ENCODE measurements at regions of chr19 and their contacts with region 1.

Region 1: DNA sequence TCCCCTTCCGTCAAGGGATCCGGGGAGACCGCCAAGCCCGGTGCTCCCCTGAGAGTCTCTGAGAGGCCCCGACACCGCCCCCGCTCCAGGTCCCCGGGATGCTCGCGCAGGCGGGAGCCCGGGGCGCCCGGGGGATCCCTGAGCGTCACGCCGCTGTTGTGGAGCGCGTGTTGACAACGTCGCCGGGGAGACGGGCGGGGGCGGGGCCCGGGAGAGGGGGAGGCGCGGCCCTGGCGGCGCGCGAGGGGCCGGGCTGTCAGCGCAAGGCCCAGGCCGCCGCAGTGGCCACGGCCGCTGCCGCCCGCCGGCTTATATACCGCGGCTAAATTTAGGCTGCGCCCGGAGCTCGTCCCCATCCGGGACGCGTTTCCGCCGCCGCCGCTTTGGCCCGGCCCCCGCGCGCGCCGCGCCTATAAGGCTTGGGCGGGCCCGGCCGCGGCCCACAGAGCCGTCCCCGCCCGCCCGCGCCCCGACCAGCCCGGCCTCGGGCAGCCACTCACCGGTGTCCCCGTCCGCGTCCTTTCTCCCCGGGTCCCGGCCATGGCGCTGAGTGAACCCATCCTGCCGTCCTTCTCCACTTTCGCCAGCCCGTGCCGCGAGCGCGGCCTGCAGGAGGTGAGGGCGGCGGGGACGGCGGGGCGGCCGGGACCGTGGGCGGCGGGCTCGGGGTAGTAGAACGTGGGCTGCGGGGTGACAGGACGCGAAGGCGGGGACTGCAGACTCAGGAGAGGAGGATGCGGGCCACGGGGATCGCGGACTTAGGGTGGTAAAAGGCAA is at the start of gene KLF2:
- DNase-seq: peak; percentile 96
- H3K4me3 Mint-ChIP-seq: peak within 1 kb of the TSS; percentile 69
- H3K27ac Mint-ChIP-seq: peak within 1 kb of the TSS; percentile 74
- H3K4me1 Mint-ChIP-seq: peaks cover 42% of the 10 kb centered on the region
- H3K27me3 Mint-ChIP-seq: peaks cover 30% of the 10 kb centered on the region
- total RNA-seq, gene KLF2: 410 to 423 TPM

Region 2: DNA sequence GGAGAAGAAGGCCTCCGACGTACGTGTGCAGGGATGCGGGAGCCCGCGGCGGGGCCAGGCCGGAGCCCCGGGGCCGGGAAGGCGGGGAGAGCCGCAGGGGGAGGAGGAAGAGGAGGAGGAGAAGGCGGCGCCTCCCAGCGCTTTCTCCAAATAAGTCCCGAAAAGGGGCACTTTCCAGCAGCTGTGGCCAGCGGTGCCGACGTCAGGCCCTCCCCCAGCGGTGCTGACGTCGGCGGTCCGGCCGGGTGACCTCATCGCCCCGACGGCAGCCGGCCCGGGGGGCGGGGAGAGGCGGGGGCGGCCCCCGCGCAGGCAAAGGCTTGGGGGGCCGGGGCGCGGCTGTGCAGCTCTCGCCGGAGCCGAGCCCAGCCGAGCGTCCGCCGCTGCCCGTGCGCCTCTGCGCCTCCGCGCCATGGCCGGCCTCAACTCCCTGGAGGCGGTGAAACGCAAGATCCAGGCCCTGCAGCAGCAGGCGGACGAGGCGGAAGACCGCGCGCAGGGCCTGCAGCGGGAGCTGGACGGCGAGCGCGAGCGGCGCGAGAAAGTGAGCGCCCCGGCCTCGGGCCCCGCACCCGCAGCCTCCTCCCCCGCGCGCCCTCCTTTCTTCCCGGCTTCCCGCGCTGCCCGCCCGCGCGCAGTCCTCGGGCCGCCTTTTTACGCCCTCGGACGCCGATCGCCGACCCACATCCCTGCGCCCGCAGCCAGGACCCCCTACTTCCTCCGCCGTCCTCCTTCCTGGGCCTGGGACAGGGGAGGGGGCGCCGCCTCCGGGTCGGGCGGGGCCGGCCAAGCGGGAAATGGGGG is 248.2 kb before region 1 on chr19 and contains the start of gene TPM4:
- CTCF ChIA-PET with region 1: no interaction called
- POLR2A ChIA-PET with region 1: interaction called, 85 read pairs
- DNase-seq: peak; percentile 94
- H3K4me3 Mint-ChIP-seq: peak within 1 kb of the TSS; percentile 82
- H3K27ac Mint-ChIP-seq: peak within 1 kb of the TSS; percentile 98
- H3K4me1 Mint-ChIP-seq: peaks cover 65% of the 10 kb centered on the region
- H3K27me3 Mint-ChIP-seq: no peaks in the 10 kb centered on the region
- total RNA-seq, gene TPM4: 592 to 611 TPM

Region 3: DNA sequence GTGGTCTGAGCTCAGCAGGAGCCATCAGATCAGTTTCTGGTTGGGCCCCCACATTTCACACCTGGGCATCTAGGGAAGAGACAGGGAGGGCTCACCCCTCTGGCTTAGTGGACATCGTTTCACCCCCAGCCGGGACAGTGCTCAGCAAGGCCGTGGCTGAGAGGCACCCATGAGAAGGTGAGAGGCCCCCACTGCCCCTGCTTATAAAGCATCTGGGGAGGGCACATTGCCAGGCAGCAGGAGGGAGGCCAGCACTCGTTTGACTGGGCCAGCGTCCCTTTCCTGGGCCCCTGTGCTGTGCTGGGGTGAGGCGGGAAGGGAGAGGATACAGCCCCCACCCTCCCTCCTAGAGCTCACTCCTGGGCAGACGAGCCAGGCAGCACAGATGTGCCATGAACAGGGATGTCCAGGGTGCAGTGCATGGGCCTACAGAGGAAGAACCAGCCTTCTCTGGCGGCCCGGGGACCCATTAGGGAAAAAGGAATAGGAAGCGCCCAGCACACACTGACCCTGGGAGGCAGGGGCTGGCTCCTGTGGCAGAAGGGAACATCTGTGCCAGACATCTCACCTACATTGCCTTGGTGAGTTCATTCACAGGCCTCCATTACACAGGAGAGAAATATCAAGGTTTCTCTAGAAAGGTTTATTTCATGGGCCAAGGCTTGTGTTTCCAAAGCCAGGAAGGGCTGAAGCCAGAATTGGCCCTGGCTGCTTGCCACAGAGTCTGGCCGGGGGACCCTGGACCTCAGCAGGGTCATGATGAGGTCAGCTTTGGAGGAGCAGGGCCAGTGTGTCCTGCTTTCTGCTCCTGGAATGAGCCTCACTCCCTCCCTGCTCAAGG is 119.1 kb before region 1 on chr19:
- CTCF ChIA-PET with region 1: no interaction called
- POLR2A ChIA-PET with region 1: no interaction called
- DNase-seq: no peak
- H3K4me3 Mint-ChIP-seq: no peak overlapping the region
- H3K27ac Mint-ChIP-seq: no peak overlapping the region
- H3K4me1 Mint-ChIP-seq: peaks cover 41% of the 10 kb centered on the region
- H3K27me3 Mint-ChIP-seq: no peaks in the 10 kb centered on the region

Region 4: GRCh38 chr19:16247353-16248182 is 77.0 kb before region 1 on chr19:
- CTCF ChIA-PET with region 1: interaction called, 46 read pairs
- POLR2A ChIA-PET with region 1: interaction called, 61 read pairs
- DNase-seq: peak; percentile 87
- H3K4me3 Mint-ChIP-seq: no peak overlapping the region
- H3K27ac Mint-ChIP-seq: peak overlapping the region; percentile 55
- H3K4me1 Mint-ChIP-seq: peaks cover 28% of the 10 kb centered on the region
- H3K27me3 Mint-ChIP-seq: peaks cover 19% of the 10 kb centered on the region

Region 5: DNA sequence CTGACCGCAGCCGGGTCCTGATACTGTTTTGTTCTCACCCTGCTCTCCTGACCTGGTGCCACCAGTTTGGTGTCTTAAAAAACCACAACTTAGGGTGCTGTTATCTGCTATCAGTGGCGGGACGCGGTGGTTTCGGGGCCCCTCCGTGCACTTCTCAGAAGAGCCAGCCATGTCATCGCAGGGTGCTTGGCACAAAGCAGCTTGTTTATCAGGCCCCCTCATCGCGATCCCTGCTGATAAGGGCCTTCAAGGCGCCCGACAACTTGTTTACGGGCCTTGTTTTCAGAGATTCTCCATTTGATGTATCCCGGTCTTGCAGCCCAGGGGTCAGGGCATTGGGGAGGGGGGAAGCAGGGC is 58.0 kb before region 1 on chr19:
- CTCF ChIA-PET with region 1: interaction called, 3 read pairs
- POLR2A ChIA-PET with region 1: interaction called, 68 read pairs
- DNase-seq: peak; percentile 86
- H3K4me3 Mint-ChIP-seq: peak overlapping the region; percentile 2
- H3K27ac Mint-ChIP-seq: peak overlapping the region; percentile 76
- H3K4me1 Mint-ChIP-seq: peaks cover 62% of the 10 kb centered on the region
- H3K27me3 Mint-ChIP-seq: peaks cover 11% of the 10 kb centered on the region

Region 6: DNA sequence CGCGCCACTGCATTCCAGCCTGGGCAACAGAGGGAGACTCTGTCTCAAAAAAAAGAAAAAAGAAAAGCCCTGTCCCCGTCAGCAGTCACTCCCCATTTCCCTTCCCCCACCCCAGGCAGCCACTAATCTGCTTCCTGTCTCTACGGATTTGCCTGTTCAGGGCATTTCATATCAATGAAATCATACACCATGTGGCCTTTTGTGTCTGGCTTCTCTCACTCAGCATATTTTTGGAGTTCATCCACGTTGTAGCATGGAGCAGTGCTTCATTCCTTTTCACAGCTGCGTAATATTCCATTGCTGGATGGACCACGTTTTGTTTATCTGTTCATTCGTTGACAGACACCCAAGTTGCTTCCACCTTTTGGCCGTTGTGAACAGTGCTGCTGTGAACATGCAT is 36.0 kb before region 1 on chr19:
- CTCF ChIA-PET with region 1: interaction called, 3 read pairs
- POLR2A ChIA-PET with region 1: interaction called, 15 read pairs
- DNase-seq: peak; percentile 33
- H3K4me3 Mint-ChIP-seq: no peak overlapping the region
- H3K27ac Mint-ChIP-seq: no peak overlapping the region
- H3K4me1 Mint-ChIP-seq: peaks cover 32% of the 10 kb centered on the region
- H3K27me3 Mint-ChIP-seq: peaks cover 35% of the 10 kb centered on the region

Region 7: DNA sequence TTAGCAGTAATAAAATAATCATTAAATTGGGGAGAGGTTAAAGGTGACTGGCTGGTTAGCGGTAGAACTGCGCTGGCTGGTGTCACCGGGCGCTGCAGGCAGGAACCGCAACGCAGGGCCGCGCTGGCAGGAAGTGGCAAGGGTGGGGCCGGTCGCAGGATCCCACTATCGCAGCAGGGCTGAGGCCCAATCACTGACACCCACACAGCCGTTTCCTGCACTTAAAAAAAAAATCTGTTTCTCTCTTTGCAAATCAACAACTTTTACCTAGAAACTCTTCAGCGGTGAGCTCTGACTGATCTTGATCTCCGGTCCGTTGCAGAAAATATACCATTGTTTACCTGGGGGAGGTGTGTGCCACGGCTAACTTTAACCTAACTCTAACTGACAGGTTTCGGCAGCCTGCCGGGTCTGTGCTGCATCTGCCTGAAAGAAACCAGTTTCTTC is 47.0 kb after region 1 on chr19:
- CTCF ChIA-PET with region 1: interaction called, 109 read pairs
- POLR2A ChIA-PET with region 1: interaction called, 3,221 read pairs
- DNase-seq: peak; percentile 96
- H3K4me3 Mint-ChIP-seq: no peak overlapping the region
- H3K27ac Mint-ChIP-seq: no peak overlapping the region
- H3K4me1 Mint-ChIP-seq: peaks cover 7% of the 10 kb centered on the region
- H3K27me3 Mint-ChIP-seq: peaks cover 2% of the 10 kb centered on the region

Measured in activated CD4-positive, alpha-beta memory T cell treated with anti-CD3 and anti-CD28 coated beads, Interleukin-2, amount 10 ng/mL, durations not matched to agents 7 days and 5 days (primary cell).